ENCODE measurements at regions of chr5 and their contacts with region 1.

Region 1: GRCh38 chr5:113705657-113706056 is 192.2 kb downstream of the YTHDC2 start:
- DNase-seq: no peak
- H3K4me3 ChIP-seq: no peak overlapping the region
- H3K27ac ChIP-seq: no peak overlapping the region
- H3K4me1 ChIP-seq: no peaks in the 10 kb centered on the region
- H3K27me3 ChIP-seq: no peaks in the 10 kb centered on the region
- CTCF ChIP-seq: no peak
- EP300 ChIP-seq: no peak
- POLR2A ChIP-seq: no peak

Region 2: GRCh38 chr5:113663880-113664541 is 41.6 kb before region 1 on chr5:
- intact Hi-C with region 1: no loop called
- DNase-seq: no peak
- H3K4me3 ChIP-seq: no peak overlapping the region
- H3K27ac ChIP-seq: no peak overlapping the region
- H3K4me1 ChIP-seq: no peaks in the 10 kb centered on the region
- H3K27me3 ChIP-seq: no peaks in the 10 kb centered on the region
- CTCF ChIP-seq: no peak
- EP300 ChIP-seq: no peak
- POLR2A ChIP-seq: no peak

Region 3: GRCh38 chr5:114999176-114999575 is 1293.5 kb after region 1 on chr5:
- intact Hi-C with region 1: loop called in 1 of 4 experiments (anchors 5 kb)
- DNase-seq: peak in 1 of 5 donors; percentile 28
- H3K4me3 ChIP-seq: no peak overlapping the region
- H3K27ac ChIP-seq: no peak overlapping the region
- H3K4me1 ChIP-seq: no peaks in the 10 kb centered on the region
- H3K27me3 ChIP-seq: no peaks in the 10 kb centered on the region
- CTCF ChIP-seq: no peak
- EP300 ChIP-seq: no peak
- POLR2A ChIP-seq: no peak